ENCODE measurements at regions of chr2 and their contacts with region 1.

Region 1: GRCh38 chr2:101961296-101962191 is 30.2 kb upstream of the IL1R2 start:
- DNase-seq: peak; percentile 92 to 99 (median 96)
- H3K4me3 ChIP-seq: peak overlapping the region; percentile 66 to 83 (median 79)
- H3K4me3 Mint-ChIP-seq: peak overlapping the region; percentile 82 to 92
- H3K27ac ChIP-seq: peak overlapping the region; percentile 97 to 100
- H3K27ac Mint-ChIP-seq: peak overlapping the region; percentile 99 to 100 (median 100)
- H3K4me1 ChIP-seq: peaks cover 81% of the 10 kb centered on the region in 2 donors
- H3K4me1 Mint-ChIP-seq: peaks cover 89% of the 10 kb centered on the region
- H3K27me3 ChIP-seq: no peaks in the 10 kb centered on the region
- H3K27me3 Mint-ChIP-seq: peaks cover 0 to 4% (median 0%) of the 10 kb centered on the region in 3 donors
- CTCF ChIP-seq: no peak

Region 2: DNA sequence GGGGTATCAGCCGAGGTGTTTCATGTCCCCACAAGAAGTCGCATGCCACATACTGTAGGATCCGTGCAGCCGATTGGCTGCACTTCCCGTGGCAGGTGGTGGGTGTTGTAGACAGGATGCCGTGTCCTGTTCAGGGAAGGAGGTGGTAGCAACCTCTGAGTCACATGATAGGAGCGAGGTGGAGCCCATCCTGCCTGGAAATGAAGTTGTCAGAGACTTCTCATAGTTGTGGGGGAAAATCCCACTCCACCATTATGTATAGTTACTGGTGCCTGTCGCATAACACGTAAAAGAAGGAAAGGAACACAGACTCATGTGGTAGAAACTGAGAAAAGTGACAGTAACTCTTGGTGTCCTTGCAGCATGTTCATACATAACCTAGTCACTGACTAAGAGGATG is 61.2 kb before region 1 on chr2:
- intact Hi-C with region 1: loop called in 1 of 2 experiments (anchors 10 kb)
- DNase-seq: no peak
- H3K4me3 ChIP-seq: no peak overlapping the region
- H3K4me3 Mint-ChIP-seq: no peak overlapping the region
- H3K27ac ChIP-seq: no peak overlapping the region
- H3K27ac Mint-ChIP-seq: no peak overlapping the region
- H3K4me1 ChIP-seq: peaks cover 0 to 2% of the 10 kb centered on the region in 2 donors
- H3K4me1 Mint-ChIP-seq: peaks cover 8% of the 10 kb centered on the region
- H3K27me3 ChIP-seq: no peaks in the 10 kb centered on the region
- H3K27me3 Mint-ChIP-seq: peaks cover 0 to 5% (median 1%) of the 10 kb centered on the region in 3 donors
- CTCF ChIP-seq: no peak

Region 3: GRCh38 chr2:101921319-101921952 is 40.1 kb before region 1 on chr2:
- intact Hi-C with region 1: loop called (anchors 2 to 5 kb)
- DNase-seq: peak; percentile 89 to 95 (median 95)
- H3K4me3 ChIP-seq: peak overlapping the region in 1 of 3 experiments; percentile 17
- H3K4me3 Mint-ChIP-seq: peak overlapping the region in 1 of 2 donors; percentile 26
- H3K27ac ChIP-seq: peak overlapping the region; percentile 81 to 88
- H3K27ac Mint-ChIP-seq: peak overlapping the region; percentile 83 to 96 (median 94)
- H3K4me1 ChIP-seq: peaks cover 28 to 38% of the 10 kb centered on the region in 2 donors
- H3K4me1 Mint-ChIP-seq: peaks cover 34% of the 10 kb centered on the region
- H3K27me3 ChIP-seq: no peaks in the 10 kb centered on the region
- H3K27me3 Mint-ChIP-seq: no peaks in the 10 kb centered on the region
- CTCF ChIP-seq: no peak

Measured in CD14-positive monocyte (primary cell).